ENCODE measurements at regions of chr16 and their contacts with region 1.

Region 1: GRCh38 chr16:30091474-30092372 is at the start of gene TBX6:
- DNase-seq: peak; percentile 95
- ATAC-seq: peak; percentile 83
- H3K4me3 Mint-ChIP-seq: peak within 1 kb of the TSS; percentile 90
- H3K27ac Mint-ChIP-seq: peak within 1 kb of the TSS; percentile 98
- H3K4me1 Mint-ChIP-seq: peaks cover 47% of the 10 kb centered on the region
- H3K27me3 Mint-ChIP-seq: no peaks in the 10 kb centered on the region
- CTCF ChIP-seq: peak; percentile 73
- total RNA-seq, gene TBX6: 2.5 TPM

Region 2: GRCh38 chr16:30041846-30042267 is 49.9 kb before region 1 on chr16:
- CTCF ChIA-PET with region 1: interaction called, 11 read pairs
- POLR2A ChIA-PET with region 1: no interaction called
- intact Hi-C with region 1: no loop called
- DNase-seq: no peak
- ATAC-seq: no peak
- H3K4me3 Mint-ChIP-seq: no peak overlapping the region
- H3K27ac Mint-ChIP-seq: no peak overlapping the region
- H3K4me1 Mint-ChIP-seq: no peaks in the 10 kb centered on the region
- H3K27me3 Mint-ChIP-seq: peaks cover 1% of the 10 kb centered on the region
- CTCF ChIP-seq: peak; percentile 54

Region 3: GRCh38 chr16:30075507-30076275 is 16.0 kb before region 1 on chr16 and contains the start of gene PPP4C:
- CTCF ChIA-PET with region 1: interaction called, 60 read pairs
- POLR2A ChIA-PET with region 1: interaction called, 70 read pairs
- intact Hi-C with region 1: no loop called
- DNase-seq: peak; percentile 95
- ATAC-seq: peak; percentile 88
- H3K4me3 Mint-ChIP-seq: peak within 1 kb of the TSS; percentile 92
- H3K27ac Mint-ChIP-seq: peak within 1 kb of the TSS; percentile 94
- H3K4me1 Mint-ChIP-seq: peaks cover 35% of the 10 kb centered on the region
- H3K27me3 Mint-ChIP-seq: no peaks in the 10 kb centered on the region
- CTCF ChIP-seq: no peak
- total RNA-seq, gene PPP4C: 116 to 121 TPM

Region 4: GRCh38 chr16:30112197-30113030 is 20.7 kb after region 1 on chr16:
- CTCF ChIA-PET with region 1: interaction called, 36 read pairs
- POLR2A ChIA-PET with region 1: no interaction called
- intact Hi-C with region 1: no loop called
- DNase-seq: peak; percentile 75
- ATAC-seq: peak; percentile 79
- H3K4me3 Mint-ChIP-seq: no peak overlapping the region
- H3K27ac Mint-ChIP-seq: no peak overlapping the region
- H3K4me1 Mint-ChIP-seq: peaks cover 6% of the 10 kb centered on the region
- H3K27me3 Mint-ChIP-seq: no peaks in the 10 kb centered on the region
- CTCF ChIP-seq: peak; percentile 92

Region 5: GRCh38 chr16:30370444-30371247 is 278.9 kb after region 1 on chr16 and contains the start of gene TBC1D10B:
- CTCF ChIA-PET with region 1: no interaction called
- POLR2A ChIA-PET with region 1: no interaction called
- intact Hi-C with region 1: loop called (anchors 10 kb)
- DNase-seq: peak; percentile 99
- ATAC-seq: peak; percentile 87
- H3K4me3 Mint-ChIP-seq: peak within 1 kb of the TSS; percentile 95
- H3K27ac Mint-ChIP-seq: peak within 1 kb of the TSS; percentile 92
- H3K4me1 Mint-ChIP-seq: peaks cover 35% of the 10 kb centered on the region
- H3K27me3 Mint-ChIP-seq: no peaks in the 10 kb centered on the region
- CTCF ChIP-seq: no peak
- total RNA-seq, gene TBC1D10B: 39.7 to 41.3 TPM

Region 6: GRCh38 chr16:30557957-30558788 is 466.4 kb after region 1 on chr16 and contains the start of gene ZNF764:
- CTCF ChIA-PET with region 1: no interaction called
- POLR2A ChIA-PET with region 1: no interaction called
- intact Hi-C with region 1: loop called (anchors 10 kb)
- DNase-seq: peak; percentile 99
- ATAC-seq: peak; percentile 96
- H3K4me3 Mint-ChIP-seq: peak within 1 kb of the TSS; percentile 88
- H3K27ac Mint-ChIP-seq: peak within 1 kb of the TSS; percentile 94
- H3K4me1 Mint-ChIP-seq: peaks cover 41% of the 10 kb centered on the region
- H3K27me3 Mint-ChIP-seq: no peaks in the 10 kb centered on the region
- CTCF ChIP-seq: no peak
- total RNA-seq, gene ZNF764: 9.7 to 10.4 TPM

Measured in activated CD8-positive, alpha-beta T cell treated with anti-CD3 and anti-CD28 coated beads for 36 hours (primary cell).